ENCODE measurements at regions of chr16 and their contacts with region 1.

Region 1: GRCh38 chr16:66886346-66886745 is 6.0 kb downstream of the PDP2 start:
- DNase-seq: no peak
- H3K4me3 Mint-ChIP-seq: no peak overlapping the region
- H3K27ac Mint-ChIP-seq: no peak overlapping the region
- H3K4me1 Mint-ChIP-seq: peaks cover 36% of the 10 kb centered on the region
- H3K27me3 Mint-ChIP-seq: no peaks in the 10 kb centered on the region

Region 2: DNA sequence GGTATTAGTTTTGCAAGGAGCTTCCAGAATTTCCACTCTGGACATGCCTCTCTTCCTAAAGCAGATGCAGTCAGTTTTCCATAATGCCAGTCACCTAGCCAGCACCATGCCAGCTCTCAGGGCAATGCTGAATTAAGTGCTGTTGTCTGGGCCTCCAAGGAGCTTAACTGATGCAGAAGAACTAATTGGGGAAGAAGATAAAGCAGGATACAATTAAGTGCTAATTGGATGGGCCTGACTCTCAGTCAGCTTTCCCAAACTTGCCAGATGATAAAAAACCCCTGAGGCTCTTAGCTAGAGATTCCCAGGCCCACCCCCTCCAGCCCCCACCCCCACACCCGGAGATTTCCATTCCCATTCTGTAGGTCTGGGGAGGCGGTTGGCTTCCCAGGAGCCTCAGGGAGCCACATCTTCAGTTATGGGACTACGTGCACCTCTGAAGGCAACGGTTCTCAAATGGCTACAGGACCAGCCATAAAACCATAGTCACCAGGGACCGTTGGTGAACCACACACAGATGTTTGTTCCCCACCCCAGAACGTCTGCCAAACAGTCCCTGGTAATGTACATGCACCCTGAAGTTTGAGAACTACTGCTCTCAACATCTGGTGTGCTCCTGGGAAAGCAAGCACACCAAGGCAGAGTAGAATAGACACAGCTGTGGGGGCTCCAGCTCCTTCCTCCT is 1018.9 kb before region 1 on chr16:
- CTCF ChIA-PET with region 1: no interaction called
- POLR2A ChIA-PET with region 1: no interaction called
- DNase-seq: no peak
- H3K4me3 Mint-ChIP-seq: no peak overlapping the region
- H3K27ac Mint-ChIP-seq: no peak overlapping the region
- H3K4me1 Mint-ChIP-seq: no peaks in the 10 kb centered on the region
- H3K27me3 Mint-ChIP-seq: no peaks in the 10 kb centered on the region

Region 3: GRCh38 chr16:66911112-66911511 is 24.8 kb after region 1 on chr16:
- CTCF ChIA-PET with region 1: interaction called, 12 read pairs
- POLR2A ChIA-PET with region 1: no interaction called
- DNase-seq: no peak
- H3K4me3 Mint-ChIP-seq: no peak overlapping the region
- H3K27ac Mint-ChIP-seq: no peak overlapping the region
- H3K4me1 Mint-ChIP-seq: peaks cover 5% of the 10 kb centered on the region
- H3K27me3 Mint-ChIP-seq: peaks cover 6% of the 10 kb centered on the region

Region 4: GRCh38 chr16:67006930-67007658 is 120.7 kb after region 1 on chr16:
- CTCF ChIA-PET with region 1: no interaction called
- POLR2A ChIA-PET with region 1: no interaction called
- DNase-seq: no peak
- H3K4me3 Mint-ChIP-seq: no peak overlapping the region
- H3K27ac Mint-ChIP-seq: no peak overlapping the region
- H3K4me1 Mint-ChIP-seq: peaks cover 34% of the 10 kb centered on the region
- H3K27me3 Mint-ChIP-seq: no peaks in the 10 kb centered on the region

Measured in activated CD4-positive, alpha-beta T cell treated with anti-CD3 and anti-CD28 coated beads, Interleukin-2, amount 10 ng/mL, durations not matched to agents 7 days and 5 days (primary cell).